ENCODE measurements at regions of chr1 and their contacts with region 1.

Region 1: GRCh38 chr1:234916840-234917239 is 211.8 kb downstream of the TOMM20 start:
- DNase-seq: no peak
- H3K4me3 ChIP-seq: no peak overlapping the region
- H3K27ac ChIP-seq: peak overlapping the region in 3 of 4 donors; percentile 39 to 69 (median 41)
- H3K4me1 ChIP-seq: peaks cover 28 to 44% (median 35%) of the 10 kb centered on the region in 4 donors
- H3K27me3 ChIP-seq: no peaks in the 10 kb centered on the region
- CTCF ChIP-seq: no peak
- EP300 ChIP-seq: no peak
- POLR2A ChIP-seq: no peak

Region 2: GRCh38 chr1:234047123-234047522 is 869.7 kb before region 1 on chr1:
- in situ Hi-C with region 1: no loop called
- intact Hi-C with region 1: no loop called
- DNase-seq: no peak
- H3K4me3 ChIP-seq: no peak overlapping the region
- H3K27ac ChIP-seq: no peak overlapping the region
- H3K4me1 ChIP-seq: no peaks in the 10 kb centered on the region
- H3K27me3 ChIP-seq: no peaks in the 10 kb centered on the region
- CTCF ChIP-seq: no peak
- EP300 ChIP-seq: no peak
- POLR2A ChIP-seq: no peak

Region 3: DNA sequence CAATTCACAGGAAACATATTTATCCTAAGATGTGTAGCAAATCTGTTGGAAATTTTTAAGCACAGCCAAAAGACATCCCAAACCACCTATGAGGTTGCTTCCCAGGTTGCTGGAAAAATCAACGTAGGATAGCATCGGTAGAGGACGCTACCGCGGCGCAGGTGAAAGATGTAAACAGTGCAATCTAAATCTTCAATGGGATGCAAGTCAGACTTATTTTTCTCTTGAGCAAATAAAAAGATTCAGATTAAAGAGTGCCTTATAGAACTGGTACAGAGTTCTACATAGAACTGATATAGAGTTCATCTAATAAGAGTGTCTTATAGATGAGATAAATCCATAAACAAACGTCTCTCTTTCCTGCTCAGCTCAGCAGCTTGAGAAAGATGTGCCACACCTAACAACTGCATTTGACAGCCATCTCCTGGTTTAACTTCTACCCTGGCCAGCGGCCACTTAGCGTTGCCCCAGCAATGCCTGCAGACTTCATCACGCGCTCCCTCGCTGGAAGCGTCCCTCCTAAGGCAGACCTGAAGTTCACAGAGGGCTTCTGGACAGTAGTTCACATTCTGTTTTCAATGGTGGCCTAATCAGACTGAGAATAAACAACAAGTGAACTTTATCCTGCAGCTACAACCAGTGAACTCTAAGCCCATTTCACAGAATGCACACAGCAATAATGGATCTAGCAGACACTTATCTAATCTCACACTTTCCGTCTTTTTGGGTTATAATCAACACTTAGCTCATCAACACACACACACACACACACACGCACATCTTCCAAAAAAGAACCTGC is 47.3 kb after region 1 on chr1:
- in situ Hi-C with region 1: no loop called
- intact Hi-C with region 1: loop called (anchors 1 kb)
- DNase-seq: no peak
- H3K4me3 ChIP-seq: no peak overlapping the region
- H3K27ac ChIP-seq: peak overlapping the region; percentile 88 to 94 (median 90)
- H3K4me1 ChIP-seq: peaks cover 35 to 66% (median 62%) of the 10 kb centered on the region in 4 donors
- H3K27me3 ChIP-seq: no peaks in the 10 kb centered on the region
- CTCF ChIP-seq: peak in 2 of 5 experiments; percentile 9 to 22
- EP300 ChIP-seq: no peak
- POLR2A ChIP-seq: no peak